ENCODE measurements at regions of chr6 and their contacts with region 1.

Region 1: GRCh38 chr6:117602151-117602898 is at the start of gene GOPC:
- DNase-seq: peak; percentile 96 to 97
- H3K4me3 ChIP-seq: peak within 1 kb of the TSS; percentile 15 to 93 (median 92)
- H3K27ac ChIP-seq: peak within 1 kb of the TSS; percentile 82 to 94 (median 90)
- H3K4me1 ChIP-seq: peaks cover 9 to 18% of the 10 kb centered on the region in 2 donors
- H3K27me3 ChIP-seq: no peaks in the 10 kb centered on the region
- CTCF ChIP-seq: no peak
- POLR2A ChIP-seq: peak in 1 of 2 donors; percentile 91
- total RNA-seq, gene GOPC: 37.9 to 49.5 (median 41.7) TPM

Region 2: DNA sequence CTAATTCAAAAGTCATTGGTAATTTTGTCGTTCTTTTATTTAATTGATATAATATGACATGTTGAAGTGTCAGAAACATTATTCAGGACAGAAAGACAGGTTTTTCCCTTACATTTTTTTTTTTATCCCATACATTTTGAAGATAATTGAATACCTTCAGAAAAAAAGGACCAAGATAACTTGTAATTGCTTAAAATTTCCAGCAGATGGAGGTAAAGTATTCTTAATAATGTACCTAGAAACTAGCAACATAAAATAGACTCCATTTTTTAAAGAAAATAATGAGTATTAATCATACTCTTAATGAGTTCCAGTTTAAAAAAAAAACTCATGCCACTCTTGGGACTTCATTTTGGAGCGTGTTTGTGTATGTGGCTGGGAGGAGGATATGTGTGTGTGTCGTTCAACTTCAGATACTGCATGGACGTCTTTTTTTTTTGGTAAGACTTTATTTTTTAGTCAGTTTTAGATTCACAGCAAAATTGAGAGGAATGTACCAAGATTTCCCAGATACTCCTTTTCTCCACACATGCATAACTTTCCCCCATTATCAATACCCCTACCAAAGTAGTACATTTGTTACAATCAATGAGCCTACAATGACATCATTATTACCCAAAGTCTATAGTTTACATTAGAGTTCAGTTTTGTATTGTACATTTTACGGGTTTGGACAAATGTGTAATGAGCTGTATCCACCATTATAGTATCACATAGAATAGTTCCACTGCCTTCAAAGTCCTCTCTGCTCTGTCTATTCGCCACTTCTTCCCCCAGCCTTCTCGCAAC is 256.0 kb before region 1 on chr6:
- intact Hi-C with region 1: loop called (anchors 10 kb)
- DNase-seq: no peak
- H3K4me3 ChIP-seq: no peak overlapping the region
- H3K27ac ChIP-seq: no peak overlapping the region
- H3K4me1 ChIP-seq: peaks cover 0 to 3% of the 10 kb centered on the region in 2 donors
- H3K27me3 ChIP-seq: no peaks in the 10 kb centered on the region
- CTCF ChIP-seq: peak in 3 of 6 experiments; percentile 51 to 63 (median 59)
- POLR2A ChIP-seq: no peak

Region 3: DNA sequence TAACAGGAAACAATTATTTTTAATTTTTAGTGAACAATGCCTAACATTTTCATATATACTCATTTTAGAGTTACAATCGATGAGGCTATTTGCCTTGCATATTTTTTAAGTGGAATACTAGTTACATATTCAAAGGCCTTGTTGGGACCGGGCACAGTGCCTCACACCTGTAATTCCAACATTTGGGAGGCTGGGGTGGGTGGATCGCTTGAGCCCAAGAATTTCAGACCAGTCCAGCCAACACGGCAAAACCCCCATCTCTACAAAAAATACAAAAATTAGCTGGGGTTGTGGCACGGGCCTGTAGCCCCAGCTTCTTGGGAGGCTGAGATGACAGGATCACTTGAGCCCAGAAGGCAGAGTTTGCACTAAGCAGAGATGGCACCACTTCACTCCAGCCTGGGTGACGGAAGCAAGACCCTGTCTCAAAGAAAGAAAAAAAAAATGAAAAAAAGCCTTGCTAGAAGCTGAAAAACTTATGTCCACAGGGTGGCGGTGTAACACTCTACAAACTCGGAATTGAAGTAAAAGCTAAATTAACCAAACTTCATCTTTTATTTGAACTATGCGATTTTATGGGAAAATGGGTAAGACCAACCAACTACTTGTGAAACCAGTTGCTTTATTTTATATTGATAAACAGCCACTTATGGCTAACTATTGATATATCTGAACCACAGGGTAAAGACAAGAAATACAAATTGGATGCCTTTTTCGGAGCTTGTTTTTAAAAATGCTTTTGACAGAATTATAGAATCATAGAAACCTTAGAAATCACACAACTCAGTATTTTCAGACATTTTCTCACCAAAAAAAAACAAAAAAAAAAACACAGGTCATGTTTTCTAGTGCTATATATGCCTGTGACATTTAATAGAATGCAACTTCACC is 152.5 kb before region 1 on chr6:
- intact Hi-C with region 1: loop called (anchors 5 kb)
- DNase-seq: peak; percentile 64 to 67
- H3K4me3 ChIP-seq: no peak overlapping the region
- H3K27ac ChIP-seq: no peak overlapping the region
- H3K4me1 ChIP-seq: peaks cover 7 to 8% of the 10 kb centered on the region in 2 donors
- H3K27me3 ChIP-seq: no peaks in the 10 kb centered on the region
- CTCF ChIP-seq: peak; percentile 48 to 86 (median 67)
- POLR2A ChIP-seq: no peak

Measured in thyroid gland (tissue), 4 donors.